MCF 10A (cell line): ENCODE measurements at regions of chr12 and their contacts with region 1.

Region 1: GRCh38 chr12:6341417-6342139 is at the start of gene TNFRSF1A:
- DNase-seq: peak; percentile 89
- H3K4me3 Mint-ChIP-seq: no peak within 1 kb of the TSS
- H3K27ac Mint-ChIP-seq: no peak within 1 kb of the TSS
- H3K4me1 Mint-ChIP-seq: peaks cover 37% of the 10 kb centered on the region
- H3K27me3 Mint-ChIP-seq: no peaks in the 10 kb centered on the region
- CTCF ChIP-seq: no peak
- total RNA-seq, gene TNFRSF1A: 103 and 110 TPM in 2 replicates

Region 2: DNA sequence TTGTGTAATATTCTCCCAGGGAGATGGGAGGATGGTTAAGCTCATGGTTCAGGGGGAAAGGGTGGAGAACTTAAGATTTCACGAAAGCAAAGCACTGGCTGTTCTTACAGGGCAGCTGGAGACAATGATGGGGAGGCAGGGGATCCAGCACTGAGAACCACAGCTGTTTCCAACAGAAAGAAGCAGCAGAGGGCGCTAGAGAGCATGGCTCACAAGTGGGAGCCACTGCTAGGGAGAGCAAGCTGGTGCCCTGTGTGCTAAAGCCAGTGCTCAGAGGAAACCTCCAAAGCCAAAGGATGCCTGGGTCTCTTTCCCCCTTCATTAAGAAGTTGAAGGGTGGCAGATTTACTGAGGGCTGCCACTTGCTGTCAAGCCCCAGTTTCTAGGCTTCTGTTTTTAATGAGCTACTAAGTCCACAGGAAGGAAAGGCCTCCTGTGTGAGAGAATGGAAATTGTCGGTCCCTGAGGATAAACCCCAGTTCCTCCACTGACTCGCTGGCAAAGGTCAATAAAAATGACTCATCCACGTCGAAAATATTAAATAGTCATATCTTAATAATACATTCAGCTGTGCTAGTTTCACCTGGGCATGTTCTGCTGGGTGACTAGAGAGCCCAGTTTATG is 596.2 kb before region 1 on chr12:
- CTCF ChIA-PET with region 1: no interaction called
- POLR2A ChIA-PET with region 1: no interaction called
- intact Hi-C with region 1: no loop called
- DNase-seq: peak; percentile 52
- H3K4me3 Mint-ChIP-seq: no peak overlapping the region
- H3K27ac Mint-ChIP-seq: no peak overlapping the region
- H3K4me1 Mint-ChIP-seq: no peaks in the 10 kb centered on the region
- H3K27me3 Mint-ChIP-seq: no peaks in the 10 kb centered on the region
- CTCF ChIP-seq: peak; percentile 26

Region 3: GRCh38 chr12:5965950-5966383 is 375.6 kb before region 1 on chr12:
- CTCF ChIA-PET with region 1: no interaction called
- POLR2A ChIA-PET with region 1: no interaction called
- intact Hi-C with region 1: no loop called
- DNase-seq: peak; percentile 61
- H3K4me3 Mint-ChIP-seq: no peak overlapping the region
- H3K27ac Mint-ChIP-seq: no peak overlapping the region
- H3K4me1 Mint-ChIP-seq: no peaks in the 10 kb centered on the region
- H3K27me3 Mint-ChIP-seq: peaks cover 50% of the 10 kb centered on the region
- CTCF ChIP-seq: peak; percentile 69

Region 4: DNA sequence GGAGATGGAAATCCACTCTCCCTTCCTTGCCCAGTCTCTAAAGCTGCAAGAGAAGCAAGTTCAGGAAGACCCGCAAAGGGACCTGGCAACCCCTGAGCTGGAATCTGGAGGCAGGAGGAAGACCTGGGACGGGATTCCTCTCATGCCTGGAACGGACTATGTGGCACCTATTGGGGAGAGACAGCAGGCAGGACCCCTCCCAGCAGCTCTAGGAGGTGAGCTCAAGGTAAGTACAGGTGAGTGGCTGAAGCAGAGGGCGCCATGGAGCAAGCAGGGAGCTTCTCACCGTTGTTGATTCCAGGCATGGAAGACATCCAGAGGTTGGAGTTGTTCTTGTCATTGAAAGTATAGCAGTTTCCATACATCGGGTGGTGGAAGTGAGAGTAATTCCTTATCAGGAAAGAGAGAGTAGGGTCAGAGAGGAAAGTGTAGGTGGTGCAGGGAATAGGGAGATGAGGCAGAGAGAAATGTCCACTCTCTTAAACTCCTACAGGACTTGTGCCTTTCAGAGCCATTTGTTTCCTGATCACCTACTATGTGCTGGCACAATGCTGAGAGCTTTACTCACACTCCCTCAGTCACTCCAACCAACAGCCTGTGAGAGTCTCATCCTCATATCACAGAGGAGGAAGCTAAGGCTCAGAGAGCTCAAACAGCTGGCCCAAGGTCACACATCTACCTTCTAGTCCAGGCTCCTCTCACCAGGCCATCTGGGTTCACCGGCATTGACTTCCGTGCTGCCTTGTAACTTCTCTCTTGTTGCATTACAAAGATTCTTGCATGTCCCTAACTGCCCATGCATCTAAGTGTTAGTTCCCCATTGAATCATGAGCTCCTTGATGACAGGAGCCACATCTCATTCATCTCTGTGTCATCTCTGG is 14.2 kb after region 1 on chr12:
- CTCF ChIA-PET with region 1: interaction called, 5 read pairs
- POLR2A ChIA-PET with region 1: interaction called, 11 read pairs
- intact Hi-C with region 1: no loop called
- DNase-seq: no peak
- H3K4me3 Mint-ChIP-seq: no peak overlapping the region
- H3K27ac Mint-ChIP-seq: peak overlapping the region; percentile 51
- H3K4me1 Mint-ChIP-seq: peaks cover 11% of the 10 kb centered on the region
- H3K27me3 Mint-ChIP-seq: no peaks in the 10 kb centered on the region
- CTCF ChIP-seq: no peak

Region 5: GRCh38 chr12:6367065-6367968 is 25.7 kb after region 1 on chr12:
- CTCF ChIA-PET with region 1: interaction called, 27 read pairs
- POLR2A ChIA-PET with region 1: interaction called, 739 read pairs
- intact Hi-C with region 1: loop called (anchors 1 kb)
- DNase-seq: no peak
- H3K4me3 Mint-ChIP-seq: no peak overlapping the region
- H3K27ac Mint-ChIP-seq: no peak overlapping the region
- H3K4me1 Mint-ChIP-seq: peaks cover 43% of the 10 kb centered on the region
- H3K27me3 Mint-ChIP-seq: no peaks in the 10 kb centered on the region
- CTCF ChIP-seq: no peak

Region 6: GRCh38 chr12:6825398-6826124 is 484.0 kb after region 1 on chr12:
- CTCF ChIA-PET with region 1: no interaction called
- POLR2A ChIA-PET with region 1: no interaction called
- intact Hi-C with region 1: no loop called
- DNase-seq: peak; percentile 84
- H3K4me3 Mint-ChIP-seq: no peak overlapping the region
- H3K27ac Mint-ChIP-seq: no peak overlapping the region
- H3K4me1 Mint-ChIP-seq: peaks cover 29% of the 10 kb centered on the region
- H3K27me3 Mint-ChIP-seq: peaks cover 99% of the 10 kb centered on the region
- CTCF ChIP-seq: peak; percentile 90